Breast epithelium (tissue), 4 donors: ENCODE measurements at regions of chr17 and their contacts with region 1.

Region 1: DNA sequence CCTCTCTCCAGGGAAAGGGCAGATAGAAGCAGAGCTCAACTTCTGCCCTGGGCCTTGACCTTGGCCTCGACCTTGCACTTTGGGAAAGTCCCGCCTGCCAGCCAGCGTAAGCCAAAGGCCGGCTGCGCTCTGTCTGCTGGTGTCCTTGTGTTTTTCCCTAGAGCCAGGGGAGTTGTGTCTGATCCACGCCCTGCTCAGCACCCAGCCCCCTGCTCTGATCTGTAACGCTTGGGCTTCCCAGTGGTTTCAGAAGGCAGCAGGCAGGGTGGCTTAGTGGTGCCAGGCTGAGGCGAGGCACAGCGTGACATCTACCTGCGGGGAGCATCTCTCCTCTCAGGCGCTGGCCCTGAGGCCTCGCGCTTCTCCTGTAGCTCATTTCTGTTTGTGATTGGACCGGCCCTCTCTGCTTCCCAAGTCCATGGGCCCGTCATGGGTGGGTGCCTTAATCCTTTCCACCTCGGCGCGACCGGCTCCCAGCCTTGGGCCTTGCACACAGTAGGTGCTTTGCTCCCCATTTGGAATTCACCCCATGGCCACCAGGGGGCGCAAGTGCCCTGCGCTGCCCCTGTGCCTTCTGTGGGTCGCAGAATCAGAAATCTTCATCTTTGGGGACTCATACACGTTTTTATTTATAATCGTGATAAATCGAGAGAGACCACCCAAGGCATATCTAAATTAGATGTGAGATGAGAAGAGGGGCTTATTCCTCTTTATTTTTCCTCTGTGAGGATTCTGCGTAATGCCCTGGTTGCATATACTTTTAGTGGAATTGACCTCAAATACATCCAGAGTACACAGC is 24.2 kb downstream of the SGSH start:
- DNase-seq: no peak
- H3K4me3 ChIP-seq: no peak overlapping the region
- H3K27ac ChIP-seq: no peak overlapping the region
- H3K4me1 ChIP-seq: no peaks in the 10 kb centered on the region
- H3K27me3 ChIP-seq: no peaks in the 10 kb centered on the region
- CTCF ChIP-seq: peak; percentile 53 to 77 (median 65)
- POLR2A ChIP-seq: no peak

Region 2: DNA sequence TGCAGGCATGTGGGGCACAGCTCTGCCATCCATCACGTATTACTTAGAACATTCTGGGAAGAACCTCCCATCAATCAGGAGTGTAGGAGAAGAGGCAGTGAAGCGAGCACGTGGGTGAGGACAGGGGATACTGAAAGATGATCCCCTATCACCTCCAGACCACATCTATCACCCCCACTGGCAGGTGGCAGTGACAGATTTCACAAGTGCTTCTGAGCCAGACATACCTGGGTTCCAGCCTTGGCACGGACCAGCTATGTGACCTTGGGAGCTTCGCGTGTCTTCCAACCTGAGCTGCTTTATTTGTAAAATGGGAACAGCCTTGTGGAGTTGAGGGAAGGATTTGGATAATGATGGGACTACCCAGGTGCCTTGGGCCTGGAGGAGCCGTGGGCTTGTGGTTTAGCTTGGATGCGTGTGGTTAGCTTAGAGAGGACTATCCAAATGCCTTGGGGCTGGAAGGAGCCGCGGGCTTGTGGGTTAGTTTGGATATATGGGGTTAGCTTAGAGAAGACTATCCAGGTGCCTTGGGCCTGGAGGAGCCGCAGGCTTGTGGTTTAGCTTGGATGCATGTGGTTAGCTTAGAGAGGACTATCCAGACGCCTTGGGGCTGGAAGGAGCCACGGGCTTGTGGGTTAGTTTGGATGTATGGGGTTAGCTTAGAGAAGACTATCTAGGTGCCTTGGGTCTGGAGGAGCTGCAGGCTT is 914.9 kb before region 1 on chr17:
- intact Hi-C with region 1: no loop called
- DNase-seq: no peak
- H3K4me3 ChIP-seq: no peak overlapping the region
- H3K27ac ChIP-seq: no peak overlapping the region
- H3K4me1 ChIP-seq: no peaks in the 10 kb centered on the region
- H3K27me3 ChIP-seq: peaks cover 0 to 47% of the 10 kb centered on the region in 2 donors
- CTCF ChIP-seq: no peak
- POLR2A ChIP-seq: no peak

Region 3: DNA sequence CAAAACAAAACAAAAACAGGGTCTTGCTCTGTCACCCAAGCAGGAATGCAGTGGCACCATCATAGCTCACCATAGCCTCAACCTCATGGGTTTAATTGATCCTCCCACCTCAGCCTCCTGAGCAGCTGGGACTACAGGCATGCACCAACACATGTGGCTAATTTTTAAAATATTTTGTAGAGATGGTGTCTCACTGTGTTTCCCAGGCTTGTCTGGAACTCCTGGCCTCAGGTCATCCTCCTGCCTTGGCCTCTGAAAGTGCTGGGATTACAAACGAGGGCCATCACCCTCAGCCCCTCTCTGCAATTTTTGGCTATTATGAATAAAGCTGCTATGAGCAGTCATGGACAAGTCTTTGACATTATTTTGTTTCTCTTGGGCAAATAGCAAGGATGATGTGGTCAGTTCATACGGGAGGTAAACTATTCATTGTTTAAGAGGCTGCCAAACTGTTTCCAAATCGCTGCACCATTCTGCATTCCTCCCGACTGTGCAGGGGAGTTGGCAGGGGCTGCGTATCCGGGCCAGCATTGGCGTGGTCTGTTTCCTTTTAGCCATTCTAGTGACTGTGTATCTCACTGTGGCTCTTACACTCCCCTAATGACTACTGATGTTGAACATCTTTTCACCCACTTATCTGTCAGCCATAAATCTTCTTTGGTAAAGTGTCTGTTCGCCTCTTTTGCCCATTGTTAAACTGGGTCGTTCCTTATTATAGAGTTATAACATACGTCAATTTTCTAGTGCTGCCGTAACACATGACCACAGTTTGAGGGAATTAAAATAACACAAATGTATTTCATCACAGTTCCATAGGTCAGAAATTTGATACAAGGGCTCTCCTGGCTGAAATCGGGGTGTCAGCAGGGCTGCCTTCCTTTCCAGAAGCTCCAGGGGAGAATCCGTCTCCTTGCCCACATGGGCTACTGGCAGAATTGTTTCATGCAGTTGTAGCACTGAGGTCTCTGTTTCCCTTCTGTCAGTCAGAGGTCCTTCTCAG is 69.9 kb before region 1 on chr17:
- intact Hi-C with region 1: no loop called
- DNase-seq: peak in 1 of 2 donors; percentile 80
- H3K4me3 ChIP-seq: no peak overlapping the region
- H3K27ac ChIP-seq: peak overlapping the region; percentile 57 to 89
- H3K4me1 ChIP-seq: peaks cover 0 to 7% of the 10 kb centered on the region in 2 donors
- H3K27me3 ChIP-seq: no peaks in the 10 kb centered on the region
- CTCF ChIP-seq: no peak
- POLR2A ChIP-seq: no peak

Region 4: DNA sequence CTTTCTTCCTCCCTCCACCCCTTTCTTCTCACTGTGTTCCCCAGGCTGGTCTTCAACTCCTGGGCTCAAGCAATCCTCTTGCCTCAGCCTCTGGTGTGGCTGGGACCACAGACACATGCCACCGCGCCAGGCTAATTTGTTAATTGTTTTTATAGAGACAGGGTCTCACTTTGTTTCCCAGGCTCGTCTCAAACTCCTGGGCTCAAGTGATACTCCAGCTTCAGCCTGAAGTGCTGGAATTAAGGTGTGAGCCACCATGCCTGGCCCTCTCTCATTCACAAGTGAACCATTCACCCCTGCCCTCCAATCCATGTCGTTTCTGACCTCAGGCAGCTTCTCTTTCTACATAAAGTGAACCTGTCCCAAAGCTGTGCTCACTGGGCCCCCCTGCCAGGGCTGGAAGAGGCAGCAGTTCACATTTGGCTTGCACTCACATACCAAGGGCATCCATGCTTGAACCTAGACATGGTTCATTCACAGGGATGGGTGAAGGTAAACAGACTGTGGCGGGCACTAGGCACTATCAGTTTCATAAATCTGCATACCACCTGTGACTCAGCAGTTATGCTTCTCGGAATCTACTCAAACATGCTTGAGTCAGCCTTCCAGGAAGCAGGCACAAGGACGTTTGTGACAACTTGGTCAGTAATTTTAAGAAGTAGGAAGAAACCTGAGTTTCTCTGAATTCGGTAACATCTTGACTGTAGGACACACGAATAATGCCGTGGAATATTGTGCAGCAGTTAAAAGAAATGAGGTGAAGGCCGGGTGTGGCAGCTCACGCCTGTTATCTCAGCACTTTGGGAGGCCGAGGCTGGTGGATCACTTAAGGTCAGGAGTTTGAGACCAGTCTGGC is 58.7 kb after region 1 on chr17:
- intact Hi-C with region 1: loop called (anchors 10 kb)
- DNase-seq: peak in 1 of 2 donors; percentile 51
- H3K4me3 ChIP-seq: no peak overlapping the region
- H3K27ac ChIP-seq: peak overlapping the region; percentile 72 to 87
- H3K4me1 ChIP-seq: peaks cover 0 to 5% of the 10 kb centered on the region in 2 donors
- H3K27me3 ChIP-seq: no peaks in the 10 kb centered on the region
- CTCF ChIP-seq: no peak
- POLR2A ChIP-seq: no peak